Transverse colon (tissue), 4 donors: ENCODE measurements at regions of chr9 and their contacts with region 1.

Region 1: GRCh38 chr9:133509179-133510079 is 15.3 kb downstream of the MYMK start:
- DNase-seq: peak; percentile 70
- H3K4me3 ChIP-seq: no peak overlapping the region
- H3K27ac ChIP-seq: peak overlapping the region in 1 of 4 donors; percentile 11
- H3K4me1 ChIP-seq: peaks cover 12 to 16% (median 13%) of the 10 kb centered on the region in 4 donors
- H3K27me3 ChIP-seq: peaks cover 7% of the 10 kb centered on the region
- CTCF ChIP-seq: no peak
- EP300 ChIP-seq: no peak
- POLR2A ChIP-seq: no peak

Region 2: GRCh38 chr9:131781069-131781468 is 1728.4 kb before region 1 on chr9:
- in situ Hi-C with region 1: no loop called
- intact Hi-C with region 1: loop called (anchors 5 kb)
- DNase-seq: no peak
- H3K4me3 ChIP-seq: no peak overlapping the region
- H3K27ac ChIP-seq: no peak overlapping the region
- H3K4me1 ChIP-seq: no peaks in the 10 kb centered on the region
- H3K27me3 ChIP-seq: peaks cover 12% of the 10 kb centered on the region
- CTCF ChIP-seq: no peak
- EP300 ChIP-seq: no peak
- POLR2A ChIP-seq: no peak

Region 3: DNA sequence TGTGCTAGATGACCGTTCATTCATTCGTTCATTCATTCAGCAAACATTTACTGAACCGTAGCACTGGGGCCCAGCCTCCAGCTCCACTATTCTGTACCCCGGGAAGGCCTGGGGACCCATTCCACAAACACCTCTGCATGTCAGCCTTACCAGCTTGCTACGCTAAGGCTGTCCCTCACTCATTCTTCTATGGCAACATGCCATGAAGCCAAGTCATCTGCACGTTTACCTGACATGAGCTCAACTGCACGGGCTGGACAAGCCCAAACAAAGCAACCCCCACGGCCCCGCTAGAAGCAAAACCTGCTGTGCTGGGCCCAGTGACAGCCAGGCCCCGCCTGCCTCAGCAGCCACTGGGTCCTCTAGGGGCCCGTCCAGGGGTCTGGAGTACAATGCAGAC is 441.6 kb before region 1 on chr9:
- in situ Hi-C with region 1: no loop called
- intact Hi-C with region 1: no loop called
- DNase-seq: no peak
- H3K4me3 ChIP-seq: no peak overlapping the region
- H3K27ac ChIP-seq: no peak overlapping the region
- H3K4me1 ChIP-seq: no peaks in the 10 kb centered on the region
- H3K27me3 ChIP-seq: no peaks in the 10 kb centered on the region
- CTCF ChIP-seq: no peak
- EP300 ChIP-seq: no peak
- POLR2A ChIP-seq: no peak

Region 4: GRCh38 chr9:133540698-133541025 is 31.2 kb after region 1 on chr9:
- in situ Hi-C with region 1: no loop called
- intact Hi-C with region 1: no loop called
- DNase-seq: no peak
- H3K4me3 ChIP-seq: no peak overlapping the region
- H3K27ac ChIP-seq: no peak overlapping the region
- H3K4me1 ChIP-seq: peaks cover 0 to 12% (median 7%) of the 10 kb centered on the region in 4 donors
- H3K27me3 ChIP-seq: peaks cover 2% of the 10 kb centered on the region
- CTCF ChIP-seq: no peak
- EP300 ChIP-seq: no peak
- POLR2A ChIP-seq: no peak

Region 5: DNA sequence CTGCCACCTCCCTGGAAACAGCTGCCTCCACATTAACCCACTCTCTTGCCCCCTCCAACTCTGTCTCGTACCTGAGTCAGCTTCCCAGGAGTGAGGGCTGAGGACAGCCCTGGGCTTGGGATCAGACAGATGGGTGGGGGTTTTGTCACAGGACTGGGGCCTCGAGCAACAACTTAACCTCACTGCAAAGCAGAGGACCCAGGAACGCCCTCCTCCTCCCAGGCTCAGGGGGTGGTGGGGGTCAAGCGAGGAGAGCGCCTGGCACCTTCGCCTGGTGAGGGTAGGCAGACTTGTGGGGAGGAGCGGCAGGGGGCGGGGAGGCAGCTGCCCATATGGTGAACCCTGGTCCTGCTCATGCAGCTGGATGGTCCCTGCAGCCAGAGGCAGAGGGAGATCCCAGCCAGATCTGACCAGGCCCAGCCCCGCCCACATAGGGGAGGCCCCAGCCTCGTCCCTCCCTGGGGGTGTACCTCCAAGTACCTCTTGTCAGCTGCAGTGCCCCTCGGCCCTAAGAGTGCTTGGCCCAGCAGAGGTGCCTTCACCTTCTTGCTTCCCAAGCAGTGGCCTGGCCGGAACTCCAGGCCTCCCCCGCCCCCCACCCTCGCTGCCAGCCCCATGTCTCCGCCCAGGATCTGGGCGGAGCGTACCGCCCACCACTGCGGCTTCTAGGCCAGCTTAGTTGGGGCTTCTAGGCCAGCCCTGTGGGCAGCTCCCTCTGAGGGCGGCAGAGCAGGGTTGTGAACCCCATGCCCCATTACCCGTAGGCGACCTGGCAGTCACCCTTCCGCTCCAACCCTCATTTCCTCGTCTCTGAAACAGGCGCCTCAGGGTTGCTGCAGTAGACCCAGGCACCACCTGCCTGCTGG is 228.6 kb after region 1 on chr9 and contains the start of gene SARDH:
- in situ Hi-C with region 1: no loop called
- intact Hi-C with region 1: no loop called
- DNase-seq: peak; percentile 52
- H3K4me3 ChIP-seq: peak within 1 kb of the TSS in 3 of 4 donors; percentile 24 to 51 (median 29)
- H3K27ac ChIP-seq: peak within 1 kb of the TSS in 1 of 4 donors; percentile 14
- H3K4me1 ChIP-seq: peaks cover 0 to 15% (median 10%) of the 10 kb centered on the region in 4 donors
- H3K27me3 ChIP-seq: no peaks in the 10 kb centered on the region
- CTCF ChIP-seq: no peak
- EP300 ChIP-seq: no peak
- POLR2A ChIP-seq: no peak
- total RNA-seq, gene SARDH: 0.68 to 1.1 (median 0.95) TPM in 3 of 4 donors, not detected in the other